Activated T-helper 1 cell treated with anti-CD3 and anti-CD28 coated beads, Interleukin-12 subunit alpha, Interleukin-12 subunit beta, Interleukin-2, Interleukin-4 antibody, amounts not matched to agents 30 ng/mL and 10 ng/mL and 1 ng/mL, durations not matched to agents 14 hours and 24 hours and 36 hours (primary cell): ENCODE measurements at regions of chr16 and their contacts with region 1.

Region 1: DNA sequence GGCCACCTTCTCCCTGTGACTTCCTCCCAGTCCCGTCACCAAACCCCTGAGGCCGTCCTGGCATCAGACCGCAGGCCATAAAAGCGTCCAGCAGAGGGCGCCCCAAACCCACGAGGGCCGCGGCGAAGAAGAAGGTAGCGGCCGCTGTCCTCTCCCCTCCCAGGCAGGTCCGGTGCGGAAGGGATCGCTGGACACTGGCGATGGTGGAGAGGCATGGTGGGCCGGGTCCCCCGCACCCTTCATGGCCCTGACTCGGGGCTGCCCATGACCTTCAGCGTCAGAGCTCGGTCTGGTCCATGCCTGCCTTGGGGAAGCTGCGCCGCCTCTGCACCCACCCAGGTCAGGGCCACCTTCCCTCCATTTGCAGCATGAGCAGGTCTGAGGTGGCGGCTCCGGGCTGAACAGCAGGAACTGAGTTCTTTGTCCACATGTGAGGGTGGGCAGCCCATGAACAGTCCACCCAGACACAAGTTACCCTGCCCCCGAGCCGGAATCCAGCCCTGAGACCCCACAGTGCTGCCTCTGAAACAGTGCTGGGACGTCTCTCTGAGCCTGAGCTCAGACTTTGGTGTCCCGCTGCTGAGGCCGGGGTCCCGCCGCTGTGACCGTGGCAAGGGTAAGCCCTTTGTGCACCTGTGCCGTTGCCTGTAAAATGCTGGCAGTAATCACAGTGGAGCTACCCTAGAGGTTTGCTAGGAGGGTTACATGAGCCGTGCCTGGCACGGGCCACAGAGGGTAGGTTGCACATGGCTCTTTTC is 40.8 kb upstream of the CMIP start:
- DNase-seq: peak; percentile 65
- H3K4me3 Mint-ChIP-seq: no peak overlapping the region
- H3K27ac Mint-ChIP-seq: no peak overlapping the region
- H3K4me1 Mint-ChIP-seq: no peaks in the 10 kb centered on the region
- H3K27me3 Mint-ChIP-seq: peaks cover 4% of the 10 kb centered on the region

Region 2: DNA sequence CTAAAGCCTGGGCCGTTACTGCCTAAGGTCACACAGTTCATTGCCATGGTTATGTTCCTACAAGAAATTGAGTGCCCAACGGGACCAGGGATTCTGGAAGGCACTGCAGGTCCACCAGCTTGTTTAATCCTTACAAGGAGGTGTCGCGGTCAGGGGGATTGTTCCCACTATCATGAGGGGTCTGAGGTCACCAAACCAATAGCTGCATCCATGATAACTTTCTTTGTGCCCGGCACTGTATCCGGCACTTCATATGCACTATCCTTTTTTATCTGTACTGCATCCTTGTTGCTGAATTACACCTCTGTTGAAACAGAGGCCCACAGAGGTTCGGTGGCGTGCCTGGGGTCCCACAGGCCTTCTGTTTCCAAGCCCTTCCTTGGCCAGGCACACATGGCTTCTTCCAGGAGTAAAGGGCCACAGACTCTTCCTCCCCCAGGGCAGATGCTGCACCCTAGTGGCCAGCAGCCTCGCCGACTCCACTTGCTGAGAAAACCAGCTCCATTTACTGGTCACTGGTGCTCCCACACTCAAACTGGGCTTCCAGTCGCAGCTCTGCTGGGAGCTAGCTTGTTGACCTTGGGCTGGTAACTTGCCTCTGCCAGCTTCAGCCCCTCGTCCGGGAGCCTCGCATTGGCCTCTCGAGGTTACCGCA is 293.3 kb after region 1 on chr16:
- intact Hi-C with region 1: loop called (anchors 1 kb)
- DNase-seq: peak; percentile 37
- H3K4me3 Mint-ChIP-seq: no peak overlapping the region
- H3K27ac Mint-ChIP-seq: peak overlapping the region; percentile 23
- H3K4me1 Mint-ChIP-seq: peaks cover 13% of the 10 kb centered on the region
- H3K27me3 Mint-ChIP-seq: no peaks in the 10 kb centered on the region

Region 3: DNA sequence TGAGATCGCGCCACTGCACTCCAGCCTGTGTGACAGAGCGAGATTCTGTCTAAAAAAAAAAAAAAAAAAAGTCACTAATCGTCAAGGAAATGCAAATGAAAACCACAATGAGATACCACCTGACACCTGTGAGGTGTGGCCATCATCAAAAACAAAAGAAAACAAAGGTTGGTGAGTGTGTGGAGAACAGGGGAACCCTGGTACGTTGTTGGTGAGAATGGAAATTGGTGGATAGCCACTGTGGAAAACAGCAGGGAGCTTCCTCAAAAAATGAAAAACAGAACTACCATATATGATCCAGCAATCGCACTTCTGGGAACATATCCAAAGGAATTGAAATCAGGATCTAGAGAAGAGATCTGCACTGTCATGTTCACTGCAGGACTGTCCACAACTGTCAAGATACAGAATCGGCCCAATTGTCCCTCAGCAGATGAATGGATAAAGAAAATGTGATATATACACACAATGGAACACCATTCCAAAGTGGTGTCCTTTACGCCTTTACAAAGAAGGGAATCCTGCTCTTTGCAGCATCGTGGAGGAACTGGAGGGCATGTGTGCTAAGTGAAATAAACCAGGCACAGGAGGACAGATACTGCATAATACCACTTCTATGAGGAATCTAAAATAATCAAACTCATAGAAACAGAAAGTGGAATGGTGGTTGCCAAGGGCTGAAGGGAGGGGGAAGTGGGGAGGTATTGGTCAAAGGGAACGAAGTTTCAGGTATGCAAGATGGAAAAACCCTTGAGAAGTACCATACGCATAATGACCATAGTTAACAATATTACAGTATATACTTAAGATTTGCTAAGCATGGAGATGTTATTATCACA is 311.8 kb after region 1 on chr16:
- intact Hi-C with region 1: loop called (anchors 1 kb)
- DNase-seq: peak; percentile 19
- H3K4me3 Mint-ChIP-seq: peak overlapping the region; percentile 63
- H3K27ac Mint-ChIP-seq: peak overlapping the region; percentile 50
- H3K4me1 Mint-ChIP-seq: peaks cover 46% of the 10 kb centered on the region
- H3K27me3 Mint-ChIP-seq: no peaks in the 10 kb centered on the region

Region 4: DNA sequence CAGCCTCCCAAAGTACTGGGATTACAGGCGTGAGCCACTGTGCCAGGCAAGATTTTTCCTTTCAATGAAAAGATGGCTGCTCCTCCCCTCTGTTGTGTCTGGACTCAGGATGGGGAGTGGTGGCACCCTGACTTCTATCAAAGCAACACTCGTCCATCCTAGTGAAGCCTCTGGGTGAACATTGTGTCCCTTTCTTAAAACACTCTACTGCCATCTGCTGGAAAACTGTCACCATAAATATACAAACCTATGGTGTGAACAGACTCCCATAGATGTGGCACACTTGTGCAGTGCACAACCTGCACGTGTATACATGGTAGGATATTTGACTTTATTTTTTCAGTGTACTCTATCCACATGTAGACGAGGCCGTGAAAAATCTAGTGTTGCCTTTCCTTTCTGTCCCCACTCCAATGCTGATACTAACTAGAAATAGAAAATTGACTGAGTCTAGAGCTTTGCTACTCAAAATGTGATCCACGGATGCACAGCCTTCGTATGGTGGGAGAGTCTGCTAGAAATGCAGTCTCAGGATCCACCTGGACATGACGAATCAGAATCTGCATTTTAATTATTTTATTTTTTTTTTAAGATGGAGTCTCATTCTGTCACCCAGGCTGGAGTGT is 319.4 kb after region 1 on chr16:
- intact Hi-C with region 1: loop called (anchors 1 kb)
- DNase-seq: peak; percentile 30
- H3K4me3 Mint-ChIP-seq: no peak overlapping the region
- H3K27ac Mint-ChIP-seq: no peak overlapping the region
- H3K4me1 Mint-ChIP-seq: peaks cover 21% of the 10 kb centered on the region
- H3K27me3 Mint-ChIP-seq: peaks cover 12% of the 10 kb centered on the region